H1 (cell line): ENCODE measurements at regions of chr11 and their contacts with region 1.

Region 1: GRCh38 chr11:111982019-111982464 is 43.2 kb upstream of the DLAT start:
- DNase-seq: peak; percentile 61 to 81
- H3K4me3 ChIP-seq: peak overlapping the region in 2 of 4 experiments; percentile 3 to 46; a peak in 3 of 8 replicates
- H3K27ac ChIP-seq: no peak overlapping the region
- H3K4me1 ChIP-seq: peaks cover 14 to 20% (median 19%) of the 10 kb centered on the region in 4 experiments; a peak in 6 of 7 replicates
- H3K27me3 ChIP-seq: no peaks in the 10 kb centered on the region; a peak in 1 of 7 replicates
- CTCF ChIP-seq: peak; percentile 82 to 94 (median 86)
- EP300 ChIP-seq: no peak
- POLR2A ChIP-seq: no peak
- RAD21 ChIP-seq: peak; percentile 85 to 86

Region 2: GRCh38 chr11:111878849-111879636 is 103.0 kb before region 1 on chr11 and contains the starts of genes CFAP68 and FDXACB1:
- CTCF ChIA-PET with region 1: interaction called, 36 read pairs
- POLR2A ChIA-PET with region 1: interaction called, 4 read pairs
- DNase-seq: peak; percentile 94 to 98
- H3K4me3 ChIP-seq: peak within 1 kb of the TSS; percentile 66 to 93 (median 82)
- H3K27ac ChIP-seq: peak within 1 kb of the TSS; percentile 95
- H3K4me1 ChIP-seq: no peaks in the 10 kb centered on the region
- H3K27me3 ChIP-seq: no peaks in the 10 kb centered on the region
- CTCF ChIP-seq: peak; percentile 91 to 98 (median 97)
- EP300 ChIP-seq: peak in 1 of 2 experiments; percentile 75; a peak in 2 of 3 replicates
- POLR2A ChIP-seq: peak; percentile 67 to 77
- RAD21 ChIP-seq: peak; percentile 89
- total RNA-seq, gene CFAP68: 21.4 and 22.6 TPM in 2 replicates
- total RNA-seq, gene FDXACB1: 2.3 and 2.4 TPM in 2 replicates

Region 3: DNA sequence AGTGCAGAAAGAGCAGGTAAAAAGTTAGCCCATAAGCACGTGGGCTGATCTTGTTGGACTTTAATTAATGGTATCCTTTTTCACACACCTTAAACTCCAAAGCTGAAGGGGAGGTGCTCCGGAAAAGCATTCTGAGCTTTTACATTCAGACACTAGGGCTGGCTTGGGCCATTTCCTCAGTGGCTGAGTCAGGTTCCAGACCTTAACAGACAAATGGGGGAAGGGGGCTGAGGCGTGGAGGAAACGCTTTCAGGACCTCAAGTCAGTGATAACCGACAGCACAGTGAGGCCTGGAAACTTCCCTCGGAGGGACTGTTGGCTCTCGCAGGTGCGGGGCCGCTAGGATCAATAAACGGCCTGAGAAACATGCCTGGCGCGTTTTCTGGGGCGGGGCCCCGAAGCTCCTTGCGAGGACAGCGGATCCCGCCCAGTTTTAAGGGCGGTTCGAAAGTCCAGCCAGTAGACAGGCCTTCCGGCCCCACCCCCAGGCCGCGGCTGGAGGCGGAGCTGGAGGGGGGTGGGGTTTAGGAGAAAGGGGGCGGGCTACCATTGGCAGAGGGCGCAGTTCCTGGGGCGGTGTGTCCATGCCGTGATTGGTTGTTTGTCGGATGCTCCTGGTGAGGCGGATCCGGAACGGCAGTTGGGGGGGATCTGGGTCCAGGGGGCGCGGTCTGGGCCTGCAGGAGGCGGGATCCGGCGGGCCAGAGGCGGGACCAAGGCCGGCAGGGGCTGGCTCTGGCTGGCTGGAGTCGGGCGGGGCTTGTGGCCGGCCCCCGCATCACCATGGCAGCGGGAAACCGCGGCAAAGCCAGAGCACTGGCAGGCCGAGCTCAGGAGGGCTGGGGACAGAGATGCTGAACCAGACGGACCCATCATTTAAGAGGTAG is 55.3 kb before region 1 on chr11:
- CTCF ChIA-PET with region 1: interaction called, 565 read pairs
- POLR2A ChIA-PET with region 1: interaction called, 10 read pairs
- DNase-seq: peak; percentile 94 to 97
- H3K4me3 ChIP-seq: peak overlapping the region; percentile 47 to 70 (median 58); a peak in 7 of 8 replicates
- H3K27ac ChIP-seq: peak overlapping the region; percentile 75
- H3K4me1 ChIP-seq: peaks cover 0 to 10% (median 3%) of the 10 kb centered on the region in 4 experiments; a peak in 5 of 7 replicates
- H3K27me3 ChIP-seq: no peaks in the 10 kb centered on the region; a peak in 1 of 7 replicates
- CTCF ChIP-seq: peak in 1 of 3 experiments; percentile 2; a peak in 1 of 4 replicates
- EP300 ChIP-seq: no peak
- POLR2A ChIP-seq: peak; percentile 15 to 82
- RAD21 ChIP-seq: no peak

Region 4: GRCh38 chr11:111954154-111954553 is 27.9 kb before region 1 on chr11:
- CTCF ChIA-PET with region 1: interaction called, 83 read pairs
- POLR2A ChIA-PET with region 1: no interaction called
- DNase-seq: no peak
- H3K4me3 ChIP-seq: no peak overlapping the region
- H3K27ac ChIP-seq: no peak overlapping the region
- H3K4me1 ChIP-seq: no peaks in the 10 kb centered on the region
- H3K27me3 ChIP-seq: no peaks in the 10 kb centered on the region
- CTCF ChIP-seq: no peak
- EP300 ChIP-seq: no peak
- POLR2A ChIP-seq: no peak
- RAD21 ChIP-seq: no peak

Region 5: GRCh38 chr11:111966678-111967077 is 15.4 kb before region 1 on chr11:
- CTCF ChIA-PET with region 1: interaction called, 83 read pairs
- POLR2A ChIA-PET with region 1: interaction called, 5 read pairs
- DNase-seq: no peak
- H3K4me3 ChIP-seq: no peak overlapping the region
- H3K27ac ChIP-seq: no peak overlapping the region
- H3K4me1 ChIP-seq: peaks cover 0 to 4% (median 1%) of the 10 kb centered on the region in 4 experiments; a peak in 2 of 7 replicates
- H3K27me3 ChIP-seq: no peaks in the 10 kb centered on the region
- CTCF ChIP-seq: no peak
- EP300 ChIP-seq: no peak
- POLR2A ChIP-seq: no peak
- RAD21 ChIP-seq: no peak

Region 6: GRCh38 chr11:112100462-112100861 is 118.4 kb after region 1 on chr11:
- CTCF ChIA-PET with region 1: no interaction called
- POLR2A ChIA-PET with region 1: no interaction called
- DNase-seq: no peak
- H3K4me3 ChIP-seq: no peak overlapping the region
- H3K27ac ChIP-seq: no peak overlapping the region
- H3K4me1 ChIP-seq: no peaks in the 10 kb centered on the region
- H3K27me3 ChIP-seq: no peaks in the 10 kb centered on the region
- CTCF ChIP-seq: no peak
- EP300 ChIP-seq: no peak
- POLR2A ChIP-seq: no peak
- RAD21 ChIP-seq: no peak

Region 7: DNA sequence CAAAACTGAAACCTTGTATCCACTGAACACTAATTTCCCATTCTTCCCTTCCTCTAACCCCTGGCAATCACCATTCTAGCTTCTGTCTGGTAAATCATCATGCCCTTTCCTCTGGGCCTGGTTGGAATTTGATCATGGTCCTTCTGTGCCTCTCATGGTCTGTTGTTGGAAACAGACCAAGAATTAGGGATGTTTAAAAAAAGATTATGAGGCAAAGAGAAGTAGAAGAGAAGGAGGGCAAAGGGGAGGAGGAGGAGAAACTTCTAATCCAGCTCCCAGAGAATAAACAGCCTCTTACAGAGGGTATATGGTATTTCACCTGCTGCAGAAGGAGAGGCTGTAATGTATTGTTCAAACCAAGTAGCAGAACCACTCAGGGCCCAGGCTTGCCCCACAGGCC is 203.8 kb after region 1 on chr11:
- CTCF ChIA-PET with region 1: no interaction called
- POLR2A ChIA-PET with region 1: no interaction called
- DNase-seq: no peak
- H3K4me3 ChIP-seq: no peak overlapping the region
- H3K27ac ChIP-seq: no peak overlapping the region
- H3K4me1 ChIP-seq: no peaks in the 10 kb centered on the region
- H3K27me3 ChIP-seq: no peaks in the 10 kb centered on the region
- CTCF ChIP-seq: no peak
- EP300 ChIP-seq: no peak
- POLR2A ChIP-seq: no peak
- RAD21 ChIP-seq: no peak

Region 8: DNA sequence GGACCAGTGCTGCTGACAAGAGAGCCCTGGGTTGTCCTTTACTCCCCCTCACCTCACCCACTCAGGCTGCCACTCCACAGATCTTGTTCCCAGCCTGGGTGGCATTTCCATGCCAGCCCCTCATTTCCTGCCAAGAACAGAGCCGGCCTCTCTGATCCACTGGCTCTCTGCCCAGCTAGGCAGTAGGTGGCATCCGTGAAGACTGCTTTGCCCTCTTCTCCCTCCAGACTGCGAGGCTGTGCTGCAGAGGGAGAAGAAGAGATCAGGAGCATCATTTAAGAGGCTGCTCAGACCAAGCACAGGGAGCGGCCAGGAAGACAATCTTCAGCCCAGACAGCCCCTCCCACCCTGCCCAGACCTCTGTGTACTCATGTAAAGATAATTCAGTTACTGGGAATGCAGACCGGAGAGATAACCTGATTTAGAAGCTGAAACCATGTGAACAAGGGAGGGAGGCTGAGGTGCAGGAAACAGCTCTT is 852.3 kb after region 1 on chr11:
- CTCF ChIA-PET with region 1: no interaction called
- POLR2A ChIA-PET with region 1: no interaction called
- DNase-seq: no peak
- H3K4me3 ChIP-seq: no peak overlapping the region
- H3K27ac ChIP-seq: no peak overlapping the region
- H3K4me1 ChIP-seq: 0 out of 7 replicates have a peak, but pooled peaks cover 0 to 4% (median 0%) of the 10 kb centered on the region in 4 experiments
- H3K27me3 ChIP-seq: no peaks in the 10 kb centered on the region
- CTCF ChIP-seq: no peak
- EP300 ChIP-seq: no peak
- POLR2A ChIP-seq: no peak
- RAD21 ChIP-seq: no peak